ENCODE measurements at regions of chr11 and their contacts with region 1.

Region 1: GRCh38 chr11:47213985-47214564 is 699 bp upstream of the DDB2 start:
- DNase-seq: peak; percentile 91
- ATAC-seq: peak; percentile 81
- H3K4me3 Mint-ChIP-seq: peak overlapping the region; percentile 99
- H3K27ac Mint-ChIP-seq: peak overlapping the region; percentile 100
- H3K4me1 Mint-ChIP-seq: peaks cover 38% of the 10 kb centered on the region
- H3K27me3 Mint-ChIP-seq: no peaks in the 10 kb centered on the region

Region 2: GRCh38 chr11:47186076-47186936 is 27.8 kb before region 1 on chr11 and contains the start of gene PACSIN3:
- CTCF ChIA-PET with region 1: interaction called, 38 read pairs
- POLR2A ChIA-PET with region 1: interaction called, 20 read pairs
- DNase-seq: peak; percentile 38
- ATAC-seq: peak; percentile 81
- H3K4me3 Mint-ChIP-seq: peak within 1 kb of the TSS; percentile 63
- H3K27ac Mint-ChIP-seq: no peak within 1 kb of the TSS
- H3K4me1 Mint-ChIP-seq: peaks cover 12% of the 10 kb centered on the region
- H3K27me3 Mint-ChIP-seq: peaks cover 33% of the 10 kb centered on the region
- total RNA-seq, gene PACSIN3: 2.0 to 2.1 TPM

Region 3: DNA sequence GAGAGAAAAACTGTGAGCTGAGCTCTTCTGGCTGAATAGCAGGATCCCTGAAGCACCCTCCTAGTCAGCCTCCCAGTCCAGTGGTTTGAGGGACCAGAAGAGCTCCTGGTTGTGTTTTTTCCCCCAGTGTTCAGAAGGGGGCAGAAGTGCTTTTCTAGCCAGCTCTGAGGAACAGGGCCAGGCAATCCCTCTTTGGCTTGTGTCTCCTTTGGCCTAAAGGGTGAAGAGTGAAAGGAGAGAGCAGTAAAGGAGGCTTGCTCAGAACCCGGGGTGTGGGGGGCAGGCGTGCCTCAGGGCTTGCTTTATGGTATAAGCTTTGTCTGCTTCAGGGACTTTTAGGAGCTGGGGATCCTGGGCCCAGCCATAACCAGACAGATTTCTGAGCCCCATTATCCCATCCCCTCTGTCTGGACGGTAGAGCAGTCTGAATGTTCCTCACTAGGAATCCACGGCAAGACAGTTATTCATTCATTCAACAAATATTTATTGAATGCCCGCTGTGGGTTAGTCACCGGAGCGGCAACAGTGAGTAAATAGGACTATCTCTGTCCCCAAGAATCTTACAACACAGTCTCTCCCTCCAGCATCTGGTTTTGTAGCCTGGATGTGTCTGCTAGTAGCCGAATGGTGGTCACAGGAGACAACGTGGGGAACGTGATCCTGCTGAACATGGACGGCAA is 20.1 kb after region 1 on chr11:
- CTCF ChIA-PET with region 1: interaction called, 21 read pairs
- POLR2A ChIA-PET with region 1: interaction called, 34 read pairs
- DNase-seq: peak; percentile 38
- ATAC-seq: peak; percentile 55
- H3K4me3 Mint-ChIP-seq: no peak overlapping the region
- H3K27ac Mint-ChIP-seq: peak overlapping the region; percentile 74
- H3K4me1 Mint-ChIP-seq: peaks cover 24% of the 10 kb centered on the region
- H3K27me3 Mint-ChIP-seq: no peaks in the 10 kb centered on the region

Region 4: GRCh38 chr11:47259178-47259977 is 45.3 kb after region 1 on chr11:
- CTCF ChIA-PET with region 1: interaction called, 27 read pairs
- POLR2A ChIA-PET with region 1: interaction called, 13 read pairs
- DNase-seq: peak; percentile 62
- ATAC-seq: peak; percentile 78
- H3K4me3 Mint-ChIP-seq: no peak overlapping the region
- H3K27ac Mint-ChIP-seq: peak overlapping the region; percentile 62
- H3K4me1 Mint-ChIP-seq: peaks cover 35% of the 10 kb centered on the region
- H3K27me3 Mint-ChIP-seq: no peaks in the 10 kb centered on the region